Ovary (tissue), 10 donors: ENCODE measurements at regions of chr2 and their contacts with region 1.

Region 1: GRCh38 chr2:23926750-23927571 is at the start of gene ATAD2B:
- DNase-seq: peak; percentile 88 to 96 (median 91)
- H3K4me3 ChIP-seq: peak within 1 kb of the TSS; percentile 92
- H3K27ac ChIP-seq: peak within 1 kb of the TSS; percentile 97 to 98
- H3K4me1 ChIP-seq: peaks cover 8% of the 10 kb centered on the region
- H3K27me3 ChIP-seq: no peaks in the 10 kb centered on the region
- CTCF ChIP-seq: peak; percentile 88 to 97 (median 95)
- EP300 ChIP-seq: no peak
- POLR2A ChIP-seq: peak; percentile 72
- total RNA-seq, gene ATAD2B: 15.0 to 29.6 (median 23.6) TPM

Region 2: DNA sequence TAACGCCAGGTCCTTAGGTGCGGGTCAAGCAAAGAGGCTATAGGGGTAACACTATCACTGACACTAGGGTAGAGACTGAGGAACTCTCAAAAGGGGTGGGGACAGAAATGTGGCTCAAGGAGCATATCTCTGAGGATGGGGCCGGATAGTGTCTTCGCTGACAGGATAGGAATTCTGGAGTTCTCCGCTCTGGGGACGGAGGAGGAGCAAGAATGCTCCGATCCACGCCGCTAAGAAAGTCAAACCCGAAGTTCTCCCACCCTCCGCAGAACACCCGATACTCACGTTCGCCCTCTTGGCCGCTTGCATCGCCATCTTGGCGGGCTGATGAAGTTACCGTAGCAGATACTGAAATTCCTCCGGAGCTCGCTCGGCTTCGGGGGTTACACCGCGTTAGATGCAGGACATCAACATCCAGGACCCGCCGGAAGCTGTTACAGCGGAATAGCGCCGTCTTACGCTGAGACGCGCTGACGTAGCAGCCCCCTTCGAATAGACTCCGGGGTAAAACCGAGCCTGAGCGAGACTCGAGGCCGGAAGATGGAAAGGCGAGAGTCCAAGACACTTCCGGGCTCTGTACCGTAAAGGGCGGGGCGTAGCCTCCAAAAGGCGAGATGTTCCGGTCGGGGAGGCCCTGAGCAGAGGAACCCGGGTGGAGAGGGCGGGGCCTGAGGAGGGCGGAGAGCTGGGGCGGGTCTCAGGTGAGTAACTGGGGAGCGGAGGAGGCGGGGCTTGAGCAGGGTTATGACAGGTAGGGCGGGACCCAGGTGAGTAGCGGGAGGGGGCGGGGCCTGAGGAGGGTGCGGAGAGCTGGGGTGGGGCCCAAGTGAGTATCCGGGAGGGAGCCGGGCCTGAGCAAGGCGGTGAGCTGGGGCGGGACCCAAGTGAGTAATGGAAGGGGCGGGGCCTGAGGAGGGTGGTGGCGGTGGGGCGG is 149.2 kb after region 1 on chr2 and contains the start of gene SF3B6:
- intact Hi-C with region 1: loop called in 2 of 4 experiments (anchors 2 to 5 kb)
- DNase-seq: peak; percentile 98
- H3K4me3 ChIP-seq: peak within 1 kb of the TSS; percentile 78
- H3K27ac ChIP-seq: peak within 1 kb of the TSS; percentile 79 to 82
- H3K4me1 ChIP-seq: peaks cover 2% of the 10 kb centered on the region
- H3K27me3 ChIP-seq: no peaks in the 10 kb centered on the region
- CTCF ChIP-seq: no peak
- EP300 ChIP-seq: peak; percentile 38
- POLR2A ChIP-seq: peak; percentile 80
- total RNA-seq, gene SF3B6: 60.6 to 145 (median 76.8) TPM

Region 3: GRCh38 chr2:24084386-24085361 is 157.7 kb after region 1 on chr2 and contains the start of gene TP53I3:
- intact Hi-C with region 1: loop called in 2 of 4 experiments (anchors 2 to 5 kb)
- DNase-seq: peak; percentile 82 to 92 (median 88)
- H3K4me3 ChIP-seq: peak within 1 kb of the TSS; percentile 55
- H3K27ac ChIP-seq: peak within 1 kb of the TSS; percentile 65 to 69
- H3K4me1 ChIP-seq: peaks cover 5% of the 10 kb centered on the region
- H3K27me3 ChIP-seq: no peaks in the 10 kb centered on the region
- CTCF ChIP-seq: peak; percentile 94 to 98 (median 97)
- EP300 ChIP-seq: no peak
- POLR2A ChIP-seq: peak; percentile 53
- total RNA-seq, gene TP53I3: 1.6 to 28.1 (median 10.3) TPM

Region 4: GRCh38 chr2:24435391-24436316 is 508.7 kb after region 1 on chr2:
- intact Hi-C with region 1: no loop called
- DNase-seq: peak; percentile 62 to 80 (median 75)
- H3K4me3 ChIP-seq: no peak overlapping the region
- H3K27ac ChIP-seq: peak overlapping the region in 1 of 2 donors; percentile 42
- H3K4me1 ChIP-seq: peaks cover 8% of the 10 kb centered on the region
- H3K27me3 ChIP-seq: no peaks in the 10 kb centered on the region
- CTCF ChIP-seq: no peak
- EP300 ChIP-seq: no peak
- POLR2A ChIP-seq: no peak